CD8-positive, alpha-beta T cell (primary cell): ENCODE measurements at regions of chr19 and their contacts with region 1.

Region 1: GRCh38 chr19:2475702-2476450 is at the start of gene GADD45B:
- DNase-seq: peak; percentile 95 to 98 (median 97)
- ATAC-seq: peak; percentile 57
- H3K4me3 ChIP-seq: peak within 1 kb of the TSS; percentile 98 to 100
- H3K4me3 Mint-ChIP-seq: peak within 1 kb of the TSS; percentile 99
- H3K27ac ChIP-seq: peak within 1 kb of the TSS; percentile 69 to 85
- H3K27ac Mint-ChIP-seq: peak within 1 kb of the TSS; percentile 87
- H3K4me1 ChIP-seq: peaks cover 30% of the 10 kb centered on the region
- H3K4me1 Mint-ChIP-seq: peaks cover 24% of the 10 kb centered on the region
- H3K27me3 ChIP-seq: no peaks in the 10 kb centered on the region
- H3K27me3 Mint-ChIP-seq: no peaks in the 10 kb centered on the region
- CTCF ChIP-seq: no peak
- total RNA-seq, gene GADD45B: 441 to 446 TPM

Region 2: DNA sequence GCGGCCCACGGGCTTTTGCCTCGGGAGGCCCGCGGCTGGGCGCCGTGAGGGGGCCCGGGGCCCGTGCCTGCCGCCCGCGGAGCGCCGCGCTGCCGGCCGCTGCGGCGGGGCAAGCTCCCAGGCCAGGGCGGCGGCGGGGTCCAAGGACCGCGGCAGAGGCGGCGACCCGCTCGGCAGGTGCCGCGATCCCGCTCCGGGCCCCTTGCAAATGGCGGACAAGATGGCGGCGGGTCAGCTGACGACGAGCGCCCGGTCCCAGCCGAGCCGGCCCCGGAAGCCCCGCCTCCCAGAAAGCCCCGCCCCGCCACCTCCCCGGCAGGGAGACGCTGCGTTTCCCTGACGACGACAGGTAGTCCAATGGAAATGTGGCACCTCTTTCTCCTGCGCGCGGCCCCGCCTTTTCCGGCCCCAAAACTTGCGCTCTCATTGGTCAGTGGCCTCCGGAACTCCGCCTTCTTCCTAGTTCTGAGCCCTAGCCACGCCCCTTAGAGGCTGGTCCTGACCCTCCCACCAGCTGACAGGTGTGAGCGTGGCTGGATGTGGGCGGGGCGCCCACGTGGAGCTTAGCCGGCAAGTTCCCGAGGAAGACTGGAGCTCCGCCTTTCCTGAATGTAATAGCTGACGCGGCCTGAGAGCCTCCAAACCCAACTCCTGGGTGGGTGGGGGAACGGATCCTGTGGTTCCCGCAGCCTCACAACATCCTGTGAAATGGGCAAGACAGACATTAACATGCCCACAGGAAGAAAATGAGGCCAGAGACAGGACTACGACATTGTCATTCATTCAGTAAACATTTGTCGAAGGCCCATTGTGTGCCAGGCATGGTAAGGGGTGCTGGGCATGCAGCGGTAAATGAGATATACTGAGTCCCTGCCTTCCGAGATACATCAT is 324.3 kb before region 1 on chr19 and contains the start of gene AP3D1:
- CTCF ChIA-PET with region 1: no interaction called
- POLR2A ChIA-PET with region 1: interaction called, 3 read pairs
- intact Hi-C with region 1: loop called (anchors 1 to 5 kb)
- DNase-seq: peak; percentile 100
- ATAC-seq: peak; percentile 91
- H3K4me3 ChIP-seq: peak within 1 kb of the TSS; percentile 60 to 87
- H3K4me3 Mint-ChIP-seq: peak within 1 kb of the TSS; percentile 85
- H3K27ac ChIP-seq: peak within 1 kb of the TSS; percentile 78 to 79
- H3K27ac Mint-ChIP-seq: peak within 1 kb of the TSS; percentile 90
- H3K4me1 ChIP-seq: peaks cover 36% of the 10 kb centered on the region
- H3K4me1 Mint-ChIP-seq: peaks cover 35% of the 10 kb centered on the region
- H3K27me3 ChIP-seq: no peaks in the 10 kb centered on the region
- H3K27me3 Mint-ChIP-seq: no peaks in the 10 kb centered on the region
- CTCF ChIP-seq: no peak
- total RNA-seq, gene AP3D1: 39.4 to 42.5 TPM

Region 3: GRCh38 chr19:2455851-2456570 is 19.9 kb before region 1 on chr19:
- CTCF ChIA-PET with region 1: interaction called, 4 read pairs
- POLR2A ChIA-PET with region 1: interaction called, 43 read pairs
- intact Hi-C with region 1: loop called in 1 of 2 experiments (anchors 1 kb)
- DNase-seq: peak in 7 of 9 experiments; percentile 22 to 87 (median 52)
- ATAC-seq: peak; percentile 41
- H3K4me3 ChIP-seq: peak overlapping the region; percentile 62 to 80
- H3K4me3 Mint-ChIP-seq: peak overlapping the region; percentile 83
- H3K27ac ChIP-seq: peak overlapping the region; percentile 32 to 50
- H3K27ac Mint-ChIP-seq: peak overlapping the region; percentile 75
- H3K4me1 ChIP-seq: peaks cover 14% of the 10 kb centered on the region
- H3K4me1 Mint-ChIP-seq: peaks cover 13% of the 10 kb centered on the region
- H3K27me3 ChIP-seq: no peaks in the 10 kb centered on the region
- H3K27me3 Mint-ChIP-seq: no peaks in the 10 kb centered on the region
- CTCF ChIP-seq: no peak

Region 4: GRCh38 chr19:2503521-2504109 is 27.7 kb after region 1 on chr19:
- CTCF ChIA-PET with region 1: interaction called, 8 read pairs
- POLR2A ChIA-PET with region 1: interaction called, 67 read pairs
- intact Hi-C with region 1: loop called (anchors 1 kb)
- DNase-seq: peak; percentile 34 to 90 (median 81)
- ATAC-seq: peak; percentile 82
- H3K4me3 ChIP-seq: peak overlapping the region; percentile 28 to 31
- H3K4me3 Mint-ChIP-seq: peak overlapping the region; percentile 63
- H3K27ac ChIP-seq: peak overlapping the region; percentile 67 to 88
- H3K27ac Mint-ChIP-seq: peak overlapping the region; percentile 98
- H3K4me1 ChIP-seq: peaks cover 26% of the 10 kb centered on the region
- H3K4me1 Mint-ChIP-seq: peaks cover 27% of the 10 kb centered on the region
- H3K27me3 ChIP-seq: no peaks in the 10 kb centered on the region
- H3K27me3 Mint-ChIP-seq: no peaks in the 10 kb centered on the region
- CTCF ChIP-seq: no peak

Region 5: DNA sequence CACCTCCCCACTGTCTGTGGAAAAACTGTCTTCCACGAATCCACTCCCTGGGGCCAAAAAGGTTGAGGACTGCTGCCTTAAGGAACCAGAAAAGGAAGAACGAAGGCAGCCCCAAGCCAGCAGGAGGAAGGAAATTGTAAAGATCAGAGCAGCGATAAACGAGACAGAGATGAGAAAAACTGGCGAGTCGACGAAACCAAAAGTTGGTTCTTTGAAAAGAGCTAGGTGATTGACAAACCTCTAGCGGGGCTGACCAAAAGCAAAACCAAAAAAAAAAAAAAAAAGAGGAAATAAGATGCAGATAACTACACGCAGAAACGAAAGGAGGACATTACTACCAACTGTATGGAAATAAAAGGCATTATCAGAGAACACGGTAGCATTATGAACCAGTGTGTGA is 77.0 kb after region 1 on chr19:
- CTCF ChIA-PET with region 1: interaction called, 7 read pairs
- POLR2A ChIA-PET with region 1: interaction called, 56 read pairs
- intact Hi-C with region 1: loop called in 1 of 2 experiments (anchors 2 kb)
- DNase-seq: peak in 8 of 9 experiments; percentile 30 to 90 (median 55)
- ATAC-seq: peak; percentile 89
- H3K4me3 ChIP-seq: peak overlapping the region; percentile 35 to 61
- H3K4me3 Mint-ChIP-seq: peak overlapping the region; percentile 77
- H3K27ac ChIP-seq: peak overlapping the region; percentile 21 to 62
- H3K27ac Mint-ChIP-seq: peak overlapping the region; percentile 76
- H3K4me1 ChIP-seq: peaks cover 12% of the 10 kb centered on the region
- H3K4me1 Mint-ChIP-seq: peaks cover 12% of the 10 kb centered on the region
- H3K27me3 ChIP-seq: no peaks in the 10 kb centered on the region
- H3K27me3 Mint-ChIP-seq: no peaks in the 10 kb centered on the region
- CTCF ChIP-seq: no peak

Region 6: GRCh38 chr19:2602391-2603181 is 126.7 kb after region 1 on chr19:
- CTCF ChIA-PET with region 1: interaction called, 380 read pairs
- POLR2A ChIA-PET with region 1: interaction called, 118 read pairs
- intact Hi-C with region 1: loop called in 1 of 2 experiments (anchors 1 kb)
- DNase-seq: no peak
- ATAC-seq: no peak
- H3K4me3 ChIP-seq: no peak overlapping the region
- H3K4me3 Mint-ChIP-seq: no peak overlapping the region
- H3K27ac ChIP-seq: no peak overlapping the region
- H3K27ac Mint-ChIP-seq: no peak overlapping the region
- H3K4me1 ChIP-seq: peaks cover 13% of the 10 kb centered on the region
- H3K4me1 Mint-ChIP-seq: peaks cover 13% of the 10 kb centered on the region
- H3K27me3 ChIP-seq: no peaks in the 10 kb centered on the region
- H3K27me3 Mint-ChIP-seq: no peaks in the 10 kb centered on the region
- CTCF ChIP-seq: no peak

Region 7: DNA sequence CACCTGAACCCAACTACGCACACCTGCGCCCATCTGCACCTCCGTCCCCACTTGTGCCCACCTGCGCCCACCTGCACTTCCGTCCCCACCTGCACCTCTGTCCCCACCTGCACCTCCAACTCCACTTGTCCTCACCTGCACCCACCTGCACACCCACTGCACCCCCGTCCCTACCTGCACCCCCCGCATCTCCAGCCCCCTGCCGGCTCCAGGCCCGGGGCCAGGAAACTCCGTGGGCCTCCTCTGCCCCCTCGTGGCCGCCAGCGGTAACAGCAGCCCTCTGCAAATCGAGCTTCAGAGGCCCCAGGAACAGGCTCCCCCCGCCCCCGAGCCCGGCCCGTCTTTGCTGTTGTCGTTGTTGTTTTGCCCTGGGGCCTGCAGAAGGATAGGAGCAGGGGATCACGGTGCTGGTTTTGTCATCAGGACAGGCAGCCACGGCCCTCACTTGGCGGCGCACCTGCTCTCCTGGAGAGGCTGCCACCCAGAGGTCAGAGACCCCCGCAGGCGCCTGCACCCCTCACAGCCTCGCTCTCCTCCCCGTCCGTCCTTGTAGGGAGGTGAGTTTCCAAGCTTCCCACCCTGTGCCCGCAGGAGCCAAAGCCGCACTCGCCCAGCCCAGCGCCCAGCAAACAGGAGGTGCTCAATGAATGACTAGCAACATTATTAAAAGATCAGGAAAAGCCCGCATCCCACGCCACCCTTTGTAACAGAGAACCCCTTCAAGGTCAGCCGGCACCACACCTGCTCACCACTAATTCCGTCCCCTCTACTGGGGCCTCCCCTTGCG is 161.2 kb after region 1 on chr19:
- CTCF ChIA-PET with region 1: interaction called, 24 read pairs
- POLR2A ChIA-PET with region 1: interaction called, 10 read pairs
- intact Hi-C with region 1: loop called (anchors 1 kb)
- DNase-seq: peak; percentile 59 to 85 (median 75)
- ATAC-seq: peak; percentile 99
- H3K4me3 ChIP-seq: no peak overlapping the region
- H3K4me3 Mint-ChIP-seq: no peak overlapping the region
- H3K27ac ChIP-seq: no peak overlapping the region
- H3K27ac Mint-ChIP-seq: no peak overlapping the region
- H3K4me1 ChIP-seq: peaks cover 12% of the 10 kb centered on the region
- H3K4me1 Mint-ChIP-seq: peaks cover 9% of the 10 kb centered on the region
- H3K27me3 ChIP-seq: no peaks in the 10 kb centered on the region
- H3K27me3 Mint-ChIP-seq: no peaks in the 10 kb centered on the region
- CTCF ChIP-seq: peak; percentile 70